Naive thymus-derived CD4-positive, alpha-beta T cell (primary cell): ENCODE measurements at regions of chr12 and their contacts with region 1.

Region 1: GRCh38 chr12:96294831-96295230 is 100.7 kb downstream of the ELK3 start:
- DNase-seq: peak in 3 of 9 donors; percentile 10 to 29 (median 14)
- ATAC-seq: no peak
- H3K4me3 ChIP-seq: no peak overlapping the region
- H3K4me3 Mint-ChIP-seq: peak overlapping the region in 4 of 10 donors; percentile 13 to 69 (median 39)
- H3K27ac ChIP-seq: no peak overlapping the region
- H3K27ac Mint-ChIP-seq: peak overlapping the region in 5 of 9 donors; percentile 39 to 81 (median 64)
- H3K4me1 ChIP-seq: peaks cover 7 to 11% of the 10 kb centered on the region in 2 donors
- H3K4me1 Mint-ChIP-seq: peaks cover 6 to 52% (median 22%) of the 10 kb centered on the region in 7 donors
- H3K27me3 ChIP-seq: no peaks in the 10 kb centered on the region
- H3K27me3 Mint-ChIP-seq: no peaks in the 10 kb centered on the region

Region 2: GRCh38 chr12:96194971-96195844 is 99.6 kb before region 1 on chr12:
- CTCF ChIA-PET with region 1: no interaction called
- POLR2A ChIA-PET with region 1: no interaction called
- intact Hi-C with region 1: no loop called
- DNase-seq: peak in 8 of 9 donors; percentile 34 to 91 (median 71)
- ATAC-seq: peak; percentile 80
- H3K4me3 ChIP-seq: peak overlapping the region; percentile 84
- H3K4me3 Mint-ChIP-seq: peak overlapping the region; percentile 92 to 100 (median 98)
- H3K27ac ChIP-seq: peak overlapping the region; percentile 86
- H3K27ac Mint-ChIP-seq: peak overlapping the region; percentile 95 to 99 (median 99)
- H3K4me1 ChIP-seq: peaks cover 29 to 33% of the 10 kb centered on the region in 2 donors
- H3K4me1 Mint-ChIP-seq: peaks cover 30 to 54% (median 46%) of the 10 kb centered on the region in 7 donors
- H3K27me3 ChIP-seq: no peaks in the 10 kb centered on the region
- H3K27me3 Mint-ChIP-seq: peaks cover 0 to 3% (median 0%) of the 10 kb centered on the region in 5 donors

Region 3: GRCh38 chr12:96308881-96309280 is 14.1 kb after region 1 on chr12:
- CTCF ChIA-PET with region 1: no interaction called
- POLR2A ChIA-PET with region 1: interaction called, 3 read pairs
- intact Hi-C with region 1: loop called in 1 of 2 experiments (anchors 2 kb)
- DNase-seq: no peak
- ATAC-seq: no peak
- H3K4me3 ChIP-seq: no peak overlapping the region
- H3K4me3 Mint-ChIP-seq: peak overlapping the region in 1 of 10 donors; percentile 30
- H3K27ac ChIP-seq: no peak overlapping the region
- H3K27ac Mint-ChIP-seq: peak overlapping the region in 4 of 9 donors; percentile 29 to 76 (median 36)
- H3K4me1 ChIP-seq: no peaks in the 10 kb centered on the region
- H3K4me1 Mint-ChIP-seq: peaks cover 10 to 51% (median 31%) of the 10 kb centered on the region in 7 donors
- H3K27me3 ChIP-seq: no peaks in the 10 kb centered on the region
- H3K27me3 Mint-ChIP-seq: no peaks in the 10 kb centered on the region